Activated CD4-positive, alpha-beta T cell treated with anti-CD3 and anti-CD28 coated beads, Interleukin-2, amount 10 ng/mL, durations not matched to agents 7 days and 5 days (primary cell): ENCODE measurements at regions of chr11 and their contacts with region 1.

Region 1: GRCh38 chr11:65779851-65780577 is 762 bp downstream of the AP5B1 start:
- DNase-seq: peak; percentile 82
- H3K4me3 Mint-ChIP-seq: peak overlapping the region; percentile 84
- H3K27ac Mint-ChIP-seq: peak overlapping the region; percentile 90
- H3K4me1 Mint-ChIP-seq: peaks cover 12% of the 10 kb centered on the region
- H3K27me3 Mint-ChIP-seq: peaks cover 17% of the 10 kb centered on the region

Region 2: DNA sequence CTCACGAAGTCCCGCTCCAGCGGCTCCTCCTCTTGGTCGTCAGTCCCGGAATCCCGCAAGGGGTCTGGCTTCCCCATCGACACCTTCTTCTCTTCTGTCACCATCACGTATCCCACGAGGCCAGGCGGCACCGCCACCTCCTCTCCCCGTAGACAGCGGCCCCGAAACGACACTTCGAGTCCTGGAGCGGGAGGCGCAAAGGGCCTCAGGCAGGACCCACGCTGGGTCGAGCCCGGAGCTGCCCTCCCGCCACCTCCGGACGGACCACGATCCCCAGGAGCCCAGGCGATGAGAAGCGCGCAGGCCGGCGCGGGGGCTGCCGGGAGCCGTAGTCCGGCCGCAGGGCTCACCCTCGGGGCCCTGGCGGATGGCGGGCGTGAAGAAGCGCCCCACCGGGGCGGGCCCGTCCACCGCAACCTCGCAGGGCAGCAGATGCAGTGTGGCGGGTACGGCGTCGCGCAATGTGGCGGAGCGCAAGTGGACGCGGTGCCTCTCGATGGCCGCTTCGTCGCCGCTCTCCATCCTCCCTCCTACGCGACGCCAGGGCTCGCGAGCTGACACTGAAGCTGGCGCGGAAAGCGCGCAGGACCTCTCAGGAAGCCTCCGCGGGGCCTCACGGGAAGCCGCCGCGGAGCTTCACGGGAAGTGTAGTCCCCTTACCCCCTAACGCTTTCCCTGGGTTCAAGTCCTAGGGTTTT is 59.6 kb before region 1 on chr11 and contains the start of gene RNASEH2C:
- CTCF ChIA-PET with region 1: interaction called, 19 read pairs
- POLR2A ChIA-PET with region 1: no interaction called
- DNase-seq: peak; percentile 83
- H3K4me3 Mint-ChIP-seq: peak within 1 kb of the TSS; percentile 89
- H3K27ac Mint-ChIP-seq: peak within 1 kb of the TSS; percentile 83
- H3K4me1 Mint-ChIP-seq: peaks cover 39% of the 10 kb centered on the region
- H3K27me3 Mint-ChIP-seq: peaks cover 2% of the 10 kb centered on the region
- total RNA-seq, gene RNASEH2C: 74.9 to 86.3 TPM

Region 3: DNA sequence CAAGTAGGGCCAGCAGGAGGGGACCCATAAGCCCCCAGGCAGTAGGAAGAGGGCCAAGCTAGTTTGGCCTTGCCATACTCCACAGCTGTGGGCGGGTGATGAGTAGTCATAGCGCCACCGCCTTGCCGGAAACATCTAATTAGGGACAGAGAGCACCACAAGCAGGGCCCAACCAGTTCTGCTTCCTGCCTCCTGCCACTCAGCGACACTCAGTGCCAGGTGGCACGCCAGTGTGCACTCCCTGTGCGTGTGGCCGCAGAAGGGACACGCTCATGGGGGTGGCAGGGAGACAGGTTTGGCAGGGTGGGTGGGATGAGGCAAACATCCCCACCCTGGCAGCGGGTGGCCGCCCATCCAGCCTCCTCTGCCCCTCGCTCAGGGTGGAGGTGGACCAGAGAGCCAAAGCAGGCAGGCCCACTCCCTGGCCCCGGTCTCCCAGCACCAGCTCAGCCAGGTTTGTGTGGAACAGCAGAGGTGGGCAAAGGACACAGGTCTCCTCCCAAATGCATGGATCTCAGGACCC is 11.7 kb after region 1 on chr11:
- CTCF ChIA-PET with region 1: interaction called, 73 read pairs
- POLR2A ChIA-PET with region 1: no interaction called
- DNase-seq: no peak
- H3K4me3 Mint-ChIP-seq: no peak overlapping the region
- H3K27ac Mint-ChIP-seq: no peak overlapping the region
- H3K4me1 Mint-ChIP-seq: peaks cover 8% of the 10 kb centered on the region
- H3K27me3 Mint-ChIP-seq: peaks cover 35% of the 10 kb centered on the region

Region 4: GRCh38 chr11:65802841-65803240 is 22.8 kb after region 1 on chr11:
- CTCF ChIA-PET with region 1: interaction called, 19 read pairs
- POLR2A ChIA-PET with region 1: no interaction called
- DNase-seq: no peak
- H3K4me3 Mint-ChIP-seq: no peak overlapping the region
- H3K27ac Mint-ChIP-seq: no peak overlapping the region
- H3K4me1 Mint-ChIP-seq: peaks cover 5% of the 10 kb centered on the region
- H3K27me3 Mint-ChIP-seq: peaks cover 26% of the 10 kb centered on the region

Region 5: DNA sequence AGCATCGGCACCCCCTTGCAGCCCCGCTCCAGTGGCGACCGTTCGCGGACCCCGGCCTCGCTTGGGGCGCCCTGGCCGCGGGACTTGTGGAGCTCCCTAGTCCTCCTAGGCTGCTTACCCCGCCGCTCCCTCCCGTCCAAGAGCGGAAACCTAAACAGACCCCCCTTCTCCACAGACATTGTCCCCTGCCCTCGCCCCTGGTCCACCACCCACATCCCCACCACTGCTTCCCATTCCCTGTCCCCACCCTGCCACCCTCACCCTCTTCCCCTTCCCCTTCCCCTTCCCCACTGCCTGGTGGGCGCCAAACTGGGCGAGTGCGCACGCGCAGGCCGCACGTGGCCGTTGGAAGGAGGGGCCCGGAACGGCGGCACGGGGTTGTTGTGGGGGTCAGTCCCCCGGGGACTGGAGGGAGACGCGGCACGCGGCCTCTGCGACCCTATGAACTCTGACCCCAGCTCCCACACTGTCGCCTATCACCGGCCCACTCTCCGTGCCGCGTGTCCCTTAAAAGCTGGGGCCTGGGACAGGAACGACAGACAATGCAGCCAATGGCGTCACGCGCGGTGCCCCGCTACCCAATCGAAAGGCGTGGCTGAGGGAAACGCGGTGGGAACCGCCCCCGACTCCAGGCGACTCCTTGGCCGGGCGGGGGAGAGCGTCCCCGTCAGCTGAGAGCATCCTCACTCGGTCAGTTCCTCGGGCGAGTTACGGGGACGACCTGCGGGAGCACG is 53.5 kb after region 1 on chr11 and contains the start of gene SNX32:
- CTCF ChIA-PET with region 1: interaction called, 23 read pairs
- POLR2A ChIA-PET with region 1: no interaction called
- DNase-seq: peak; percentile 96
- H3K4me3 Mint-ChIP-seq: no peak within 1 kb of the TSS
- H3K27ac Mint-ChIP-seq: no peak within 1 kb of the TSS
- H3K4me1 Mint-ChIP-seq: peaks cover 17% of the 10 kb centered on the region
- H3K27me3 Mint-ChIP-seq: peaks cover 25% of the 10 kb centered on the region
- total RNA-seq, gene SNX32: 2.1 to 2.2 TPM

Region 6: DNA sequence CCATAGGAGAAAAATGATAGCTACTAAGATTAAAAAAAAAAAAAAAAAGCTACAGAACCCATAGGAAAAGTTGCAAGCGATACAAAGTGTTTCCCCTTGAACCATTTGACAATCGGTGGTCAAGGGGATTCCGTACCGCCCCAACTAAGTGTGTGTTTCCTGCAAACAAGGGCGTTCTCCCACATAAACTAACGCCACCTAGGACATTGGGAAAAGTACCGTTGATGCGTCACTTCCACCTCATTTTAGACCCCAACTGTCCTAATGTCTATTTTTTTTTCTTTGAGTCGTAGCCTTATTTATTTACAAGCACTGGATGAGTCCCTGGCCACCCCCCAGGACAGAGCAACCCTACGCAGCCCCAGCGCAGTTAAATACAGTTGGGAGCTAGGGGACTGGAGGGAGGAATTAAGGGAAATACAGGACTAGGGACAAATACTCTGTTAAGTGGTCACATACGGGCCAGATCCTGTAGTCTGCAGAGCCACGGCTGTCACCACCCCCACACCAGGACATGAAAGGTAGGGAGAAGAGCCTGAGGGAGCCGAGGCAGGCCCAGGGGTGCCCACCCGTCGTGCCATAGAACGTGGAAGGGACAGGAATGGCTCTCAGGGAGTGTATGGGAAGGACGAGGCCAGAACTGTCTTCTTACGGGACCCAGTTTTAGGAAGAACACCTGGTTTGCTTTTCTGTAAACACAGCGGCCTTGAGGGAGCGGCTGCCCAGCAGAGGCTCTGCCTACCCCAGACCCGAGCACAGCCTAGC is 203.0 kb after region 1 on chr11:
- CTCF ChIA-PET with region 1: interaction called, 15 read pairs
- POLR2A ChIA-PET with region 1: no interaction called
- DNase-seq: no peak
- H3K4me3 Mint-ChIP-seq: no peak overlapping the region
- H3K27ac Mint-ChIP-seq: no peak overlapping the region
- H3K4me1 Mint-ChIP-seq: no peaks in the 10 kb centered on the region
- H3K27me3 Mint-ChIP-seq: no peaks in the 10 kb centered on the region